ENCODE measurements at regions of chr14 and their contacts with region 1.

Region 1: GRCh38 chr14:105086833-105087307 is 21.6 kb upstream of the GPR132 start:
- DNase-seq: peak; percentile 94
- ATAC-seq: peak; percentile 87
- H3K4me3 Mint-ChIP-seq: peak overlapping the region; percentile 64
- H3K27ac Mint-ChIP-seq: no peak overlapping the region
- H3K4me1 Mint-ChIP-seq: peaks cover 8% of the 10 kb centered on the region
- H3K27me3 Mint-ChIP-seq: no peaks in the 10 kb centered on the region

Region 2: GRCh38 chr14:104976198-104977007 is 110.5 kb before region 1 on chr14:
- CTCF ChIA-PET with region 1: interaction called, 3 read pairs
- POLR2A ChIA-PET with region 1: no interaction called
- intact Hi-C with region 1: loop called in 1 of 2 experiments (anchors 1 kb)
- DNase-seq: peak; percentile 92
- ATAC-seq: peak; percentile 86
- H3K4me3 Mint-ChIP-seq: peak overlapping the region; percentile 19
- H3K27ac Mint-ChIP-seq: no peak overlapping the region
- H3K4me1 Mint-ChIP-seq: peaks cover 6% of the 10 kb centered on the region
- H3K27me3 Mint-ChIP-seq: peaks cover 16% of the 10 kb centered on the region

Region 3: GRCh38 chr14:105059035-105059924 is 27.6 kb before region 1 on chr14:
- CTCF ChIA-PET with region 1: interaction called, 14 read pairs
- POLR2A ChIA-PET with region 1: interaction called, 4 read pairs
- intact Hi-C with region 1: loop called (anchors 1 kb)
- DNase-seq: peak; percentile 83
- ATAC-seq: peak; percentile 67
- H3K4me3 Mint-ChIP-seq: peak overlapping the region; percentile 92
- H3K27ac Mint-ChIP-seq: peak overlapping the region; percentile 88
- H3K4me1 Mint-ChIP-seq: peaks cover 48% of the 10 kb centered on the region
- H3K27me3 Mint-ChIP-seq: no peaks in the 10 kb centered on the region

Region 4: DNA sequence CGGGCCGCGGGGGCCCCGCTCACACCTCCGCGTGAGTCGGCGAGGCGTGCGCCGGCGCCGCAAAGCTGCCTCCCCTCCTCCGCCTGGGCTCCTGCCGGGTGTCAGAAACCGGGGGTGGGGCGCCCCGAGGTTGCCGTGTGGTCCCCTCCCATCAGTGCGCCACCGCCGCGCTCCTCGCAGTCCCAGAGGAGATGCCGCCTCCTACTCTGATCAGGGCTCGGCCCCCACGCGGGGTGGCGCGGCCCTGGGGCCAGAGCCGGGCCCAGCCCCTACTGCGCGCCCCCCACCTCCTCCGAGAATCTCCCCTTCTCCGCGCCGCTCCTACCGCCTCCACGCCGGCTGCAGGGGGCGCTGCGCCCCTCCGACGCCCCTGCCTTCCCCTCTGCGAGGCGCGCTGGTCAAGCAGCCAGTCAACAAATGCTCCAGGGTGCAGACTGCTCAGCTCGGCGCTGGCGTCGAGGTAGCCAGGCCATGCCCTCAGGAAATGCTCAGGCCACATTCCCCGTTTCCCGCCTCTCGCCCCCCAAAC is 82.2 kb after region 1 on chr14:
- CTCF ChIA-PET with region 1: interaction called, 3 read pairs
- POLR2A ChIA-PET with region 1: no interaction called
- intact Hi-C with region 1: loop called in 1 of 2 experiments (anchors 5 kb)
- DNase-seq: peak; percentile 69
- ATAC-seq: peak; percentile 55
- H3K4me3 Mint-ChIP-seq: peak overlapping the region; percentile 53
- H3K27ac Mint-ChIP-seq: no peak overlapping the region
- H3K4me1 Mint-ChIP-seq: peaks cover 4% of the 10 kb centered on the region
- H3K27me3 Mint-ChIP-seq: peaks cover 6% of the 10 kb centered on the region

Region 5: GRCh38 chr14:105203057-105203531 is 116.2 kb after region 1 on chr14:
- CTCF ChIA-PET with region 1: no interaction called
- POLR2A ChIA-PET with region 1: no interaction called
- intact Hi-C with region 1: loop called in 1 of 2 experiments (anchors 5 kb)
- DNase-seq: peak; percentile 78
- ATAC-seq: peak; percentile 52
- H3K4me3 Mint-ChIP-seq: no peak overlapping the region
- H3K27ac Mint-ChIP-seq: no peak overlapping the region
- H3K4me1 Mint-ChIP-seq: peaks cover 7% of the 10 kb centered on the region
- H3K27me3 Mint-ChIP-seq: peaks cover 14% of the 10 kb centered on the region

Region 6: GRCh38 chr14:105294142-105294597 is 207.3 kb after region 1 on chr14:
- CTCF ChIA-PET with region 1: no interaction called
- POLR2A ChIA-PET with region 1: no interaction called
- intact Hi-C with region 1: loop called in 1 of 2 experiments (anchors 5 kb)
- DNase-seq: peak; percentile 92
- ATAC-seq: peak; percentile 95
- H3K4me3 Mint-ChIP-seq: peak overlapping the region; percentile 56
- H3K27ac Mint-ChIP-seq: peak overlapping the region; percentile 90
- H3K4me1 Mint-ChIP-seq: peaks cover 54% of the 10 kb centered on the region
- H3K27me3 Mint-ChIP-seq: no peaks in the 10 kb centered on the region

Region 7: DNA sequence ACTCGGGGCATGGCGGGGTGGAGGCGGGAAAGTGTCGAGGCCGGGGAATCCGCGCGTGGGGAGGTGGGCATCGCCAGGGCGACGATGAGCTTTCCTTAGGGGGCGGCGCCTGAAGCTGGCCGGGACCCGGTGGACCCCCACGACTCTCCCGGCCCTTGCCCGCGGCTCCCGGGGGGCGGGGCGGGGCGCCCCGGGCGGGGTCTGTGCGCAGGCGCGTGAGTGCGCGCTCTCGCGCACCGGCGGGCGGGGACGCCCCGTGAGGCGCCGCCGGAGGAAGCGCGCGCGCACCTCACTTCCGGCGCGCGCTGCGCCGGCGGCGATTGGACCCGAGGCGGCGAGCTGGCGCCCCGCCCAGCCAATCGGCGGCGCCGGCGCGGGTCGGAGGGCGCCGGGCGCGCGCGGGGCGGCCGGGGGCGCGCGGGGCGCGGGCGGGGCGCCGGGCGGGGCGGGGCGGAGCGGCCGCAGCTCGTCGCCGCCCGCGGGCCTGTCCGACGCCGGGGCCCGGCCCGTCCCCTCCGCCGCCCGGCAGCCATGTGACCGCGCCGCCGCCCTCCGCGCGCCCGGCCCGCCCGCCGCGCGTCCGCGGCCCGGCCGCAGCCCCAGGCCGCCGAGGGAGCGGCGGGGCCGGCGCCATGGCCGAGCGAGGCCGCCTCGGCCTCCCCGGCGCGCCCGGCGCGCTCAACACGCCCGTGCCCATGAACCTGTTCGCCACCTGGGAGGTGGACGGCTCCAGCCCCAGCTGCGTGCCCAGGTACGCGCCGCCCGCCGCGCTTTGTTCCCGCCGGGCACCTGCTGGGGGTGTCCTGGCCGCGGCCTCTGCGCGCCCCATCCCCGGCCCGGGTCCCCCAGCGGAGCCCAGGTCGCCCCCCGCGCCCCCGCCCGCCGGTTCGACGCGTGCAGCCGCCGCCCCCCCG is 227.7 kb after region 1 on chr14 and contains the start of gene PACS2:
- CTCF ChIA-PET with region 1: no interaction called
- POLR2A ChIA-PET with region 1: no interaction called
- intact Hi-C with region 1: no loop called
- DNase-seq: peak; percentile 86
- ATAC-seq: peak; percentile 79
- H3K4me3 Mint-ChIP-seq: peak within 1 kb of the TSS; percentile 84
- H3K27ac Mint-ChIP-seq: peak within 1 kb of the TSS; percentile 71
- H3K4me1 Mint-ChIP-seq: peaks cover 30% of the 10 kb centered on the region
- H3K27me3 Mint-ChIP-seq: no peaks in the 10 kb centered on the region
- total RNA-seq, gene PACS2: 30.6 to 32.9 TPM

Region 8: DNA sequence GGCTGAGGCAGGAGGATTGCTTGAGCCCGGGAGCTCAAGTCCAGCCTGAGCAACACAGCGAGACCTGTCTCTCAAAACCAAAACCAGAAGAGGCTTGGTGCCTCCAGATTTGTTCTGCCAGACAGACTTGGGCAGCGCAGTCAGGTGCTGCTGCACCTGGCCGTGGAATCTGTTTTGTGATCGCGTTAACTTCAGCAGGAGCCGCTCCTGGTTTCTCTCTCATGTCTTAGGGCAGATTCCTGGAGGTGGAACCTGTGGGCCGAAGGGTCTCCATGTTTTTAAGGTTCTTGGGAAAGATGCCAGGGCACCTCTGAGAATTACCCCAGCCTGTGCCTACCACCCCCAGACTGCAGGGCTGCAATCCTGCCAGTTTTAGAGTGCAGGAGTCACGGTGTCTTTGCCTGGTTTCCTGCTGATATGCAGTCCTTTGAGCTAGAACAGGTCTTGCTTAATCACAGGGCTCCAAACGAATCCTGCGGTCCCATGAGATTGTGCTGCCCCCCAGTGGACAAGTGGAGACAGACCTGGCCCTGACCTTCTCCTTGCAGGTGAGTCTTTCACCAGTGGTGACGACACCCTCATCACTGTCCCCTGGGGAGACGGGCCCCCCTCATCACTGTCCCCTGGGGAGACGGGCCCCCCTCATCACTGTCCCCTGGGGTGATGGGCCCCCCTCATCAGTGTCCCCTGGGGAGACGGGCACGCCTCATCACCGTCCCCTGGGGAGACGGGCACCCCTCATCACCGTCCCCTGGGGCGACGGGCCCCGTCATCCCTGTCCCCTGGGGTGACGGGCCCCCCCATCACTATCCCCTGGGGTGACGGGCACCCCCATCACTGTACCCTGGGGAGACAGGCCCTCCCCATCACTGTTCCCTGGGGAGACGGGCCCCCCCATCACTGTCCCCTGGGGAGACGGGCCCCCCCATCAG is 265.3 kb after region 1 on chr14:
- CTCF ChIA-PET with region 1: interaction called, 5 read pairs
- POLR2A ChIA-PET with region 1: no interaction called
- intact Hi-C with region 1: loop called (anchors 1 kb)
- DNase-seq: peak; percentile 94
- ATAC-seq: peak; percentile 99
- H3K4me3 Mint-ChIP-seq: no peak overlapping the region
- H3K27ac Mint-ChIP-seq: no peak overlapping the region
- H3K4me1 Mint-ChIP-seq: peaks cover 2% of the 10 kb centered on the region
- H3K27me3 Mint-ChIP-seq: no peaks in the 10 kb centered on the region